CD4-positive, alpha-beta T cell (primary cell): ENCODE measurements at regions of chr1 and their contacts with region 1.

Region 1: DNA sequence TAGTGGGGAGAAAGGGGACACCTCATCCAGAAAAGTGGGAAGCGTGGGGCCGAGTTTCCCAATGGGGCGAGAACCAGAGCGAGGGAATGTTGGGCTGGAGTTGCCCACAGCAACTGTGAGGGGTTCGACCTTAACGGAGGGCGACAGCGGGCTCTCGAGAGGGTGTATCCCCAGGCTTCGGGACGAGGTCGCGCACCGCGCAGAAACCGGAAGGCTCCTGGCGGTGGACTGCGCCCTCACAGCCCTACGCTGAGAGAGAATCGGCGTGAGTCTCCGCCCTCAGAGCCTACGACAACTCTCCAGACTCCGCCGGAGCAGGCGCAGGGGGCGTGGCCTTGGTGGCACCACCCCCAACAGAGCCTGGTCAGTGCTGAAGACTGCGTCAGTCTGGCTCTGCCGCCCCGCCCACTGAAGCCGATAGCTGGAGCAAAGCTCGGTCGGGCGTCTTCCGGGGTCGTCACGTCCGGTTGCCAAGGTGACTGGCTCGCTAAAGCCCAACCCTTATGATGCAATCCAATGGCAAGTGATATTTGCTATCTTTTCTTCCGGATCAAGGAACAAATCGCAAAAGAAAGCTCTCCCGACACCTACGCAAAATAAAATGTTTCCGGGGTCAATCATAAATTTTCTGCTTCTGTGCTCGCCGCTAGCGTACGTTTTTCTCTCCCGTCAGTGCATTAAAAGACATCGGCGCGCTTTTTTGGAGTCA is at the start of gene LRIF1:
- DNase-seq: peak; percentile 99 to 100 (median 100)
- ATAC-seq: peak; percentile 95
- H3K4me3 ChIP-seq: peak within 1 kb of the TSS; percentile 76
- H3K4me3 Mint-ChIP-seq: peak within 1 kb of the TSS; percentile 90
- H3K27ac ChIP-seq: peak within 1 kb of the TSS; percentile 94 to 100
- H3K27ac Mint-ChIP-seq: peak within 1 kb of the TSS; percentile 93
- H3K4me1 ChIP-seq: peaks cover 12% of the 10 kb centered on the region
- H3K4me1 Mint-ChIP-seq: peaks cover 36% of the 10 kb centered on the region
- H3K27me3 ChIP-seq: peaks cover 4 to 9% of the 10 kb centered on the region in 2 experiments
- H3K27me3 Mint-ChIP-seq: peaks cover 15% of the 10 kb centered on the region
- CTCF ChIP-seq: no peak
- total RNA-seq, gene LRIF1: 1.6 to 1.8 TPM

Region 2: GRCh38 chr1:110034451-110035235 is 929.2 kb before region 1 on chr1 and contains the start of gene STRIP1:
- CTCF ChIA-PET with region 1: no interaction called
- POLR2A ChIA-PET with region 1: no interaction called
- intact Hi-C with region 1: loop called in 1 of 2 experiments (anchors 5 kb)
- DNase-seq: peak; percentile 85 to 98 (median 89)
- ATAC-seq: peak; percentile 95
- H3K4me3 ChIP-seq: peak within 1 kb of the TSS; percentile 84
- H3K4me3 Mint-ChIP-seq: peak within 1 kb of the TSS; percentile 98
- H3K27ac ChIP-seq: peak within 1 kb of the TSS; percentile 37 to 64
- H3K27ac Mint-ChIP-seq: peak within 1 kb of the TSS; percentile 81
- H3K4me1 ChIP-seq: peaks cover 41% of the 10 kb centered on the region
- H3K4me1 Mint-ChIP-seq: peaks cover 56% of the 10 kb centered on the region
- H3K27me3 ChIP-seq: no peaks in the 10 kb centered on the region
- H3K27me3 Mint-ChIP-seq: no peaks in the 10 kb centered on the region
- CTCF ChIP-seq: no peak
- total RNA-seq, gene STRIP1: 74.3 to 80.9 TPM

Region 3: DNA sequence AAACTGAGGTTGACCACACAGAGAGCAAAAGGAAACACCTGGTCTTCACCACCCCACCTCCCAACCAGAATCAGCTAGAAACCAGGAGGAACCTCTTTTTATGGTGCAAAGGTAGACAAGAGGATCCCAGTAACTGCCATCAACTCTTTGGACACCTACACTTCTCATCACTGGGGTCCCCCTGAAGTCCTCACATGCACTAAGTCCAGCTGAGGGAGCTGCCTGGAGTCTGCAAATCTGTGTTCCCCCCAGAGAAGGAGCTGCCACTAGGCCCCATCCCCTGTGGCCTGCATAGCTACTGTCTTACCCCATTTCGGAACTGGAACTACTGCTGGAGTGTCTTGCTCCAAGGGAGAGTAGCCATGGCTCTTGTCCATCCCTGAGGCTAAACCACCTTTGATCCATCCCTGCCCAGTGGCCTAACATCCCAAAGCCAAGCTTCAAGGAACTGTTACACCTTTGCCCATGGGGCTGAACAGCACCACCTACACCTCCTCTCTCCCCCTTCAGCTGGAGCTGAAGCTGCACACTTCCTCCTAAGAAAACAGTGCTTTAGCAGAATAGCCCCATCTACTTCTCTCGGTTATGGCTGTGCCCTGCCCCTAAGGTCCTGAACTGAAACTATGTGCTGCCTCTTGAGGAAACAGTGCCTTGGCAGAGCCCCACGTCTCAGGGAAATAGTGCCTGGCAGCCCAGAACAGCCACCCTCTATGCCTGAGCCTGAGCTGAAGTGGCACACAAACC is 176.3 kb before region 1 on chr1:
- CTCF ChIA-PET with region 1: interaction called, 3 read pairs
- POLR2A ChIA-PET with region 1: interaction called, 40 read pairs
- intact Hi-C with region 1: loop called (anchors 2 to 10 kb)
- DNase-seq: peak in 11 of 14 experiments; percentile 4 to 87 (median 41)
- ATAC-seq: peak; percentile 71
- H3K4me3 ChIP-seq: peak overlapping the region; percentile 35
- H3K4me3 Mint-ChIP-seq: peak overlapping the region; percentile 75
- H3K27ac ChIP-seq: peak overlapping the region; percentile 23 to 58
- H3K27ac Mint-ChIP-seq: peak overlapping the region; percentile 82
- H3K4me1 ChIP-seq: peaks cover 55% of the 10 kb centered on the region
- H3K4me1 Mint-ChIP-seq: peaks cover 77% of the 10 kb centered on the region
- H3K27me3 ChIP-seq: no peaks in the 10 kb centered on the region
- H3K27me3 Mint-ChIP-seq: no peaks in the 10 kb centered on the region
- CTCF ChIP-seq: no peak

Region 4: DNA sequence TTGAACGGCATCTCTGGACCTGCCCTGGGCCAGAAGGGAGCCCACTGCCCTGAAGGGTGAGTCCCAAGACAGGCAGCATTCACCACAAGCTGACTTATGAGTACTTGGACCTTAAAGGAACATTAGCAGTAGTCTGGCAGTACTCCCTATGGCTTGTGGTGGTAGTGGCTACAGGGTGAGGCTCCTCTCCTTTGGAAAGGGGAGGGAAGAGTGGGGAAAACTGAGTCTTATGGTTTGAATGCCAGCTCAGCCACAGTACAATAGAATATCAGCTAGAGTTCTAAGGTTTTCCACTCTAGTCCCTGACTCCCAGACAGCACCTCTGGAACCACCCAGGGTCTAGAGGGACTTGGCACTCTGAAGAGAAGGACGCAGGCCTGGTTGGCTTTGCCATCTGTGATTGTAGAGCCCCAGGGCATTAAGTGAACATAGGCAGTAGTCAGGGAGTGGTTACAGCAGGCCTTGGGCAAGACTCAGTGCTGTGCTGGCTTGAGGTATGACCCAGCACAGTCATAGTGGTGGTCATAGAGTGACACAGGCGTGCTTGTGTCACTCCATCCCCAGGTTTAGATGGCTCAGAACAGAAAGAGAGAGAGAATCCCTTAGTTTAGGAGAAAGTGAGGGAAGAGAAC is 59.9 kb before region 1 on chr1:
- CTCF ChIA-PET with region 1: no interaction called
- POLR2A ChIA-PET with region 1: interaction called, 9 read pairs
- intact Hi-C with region 1: loop called in 1 of 2 experiments (anchors 5 kb)
- DNase-seq: peak in 1 of 14 experiments; percentile 26
- ATAC-seq: peak; percentile 18
- H3K4me3 ChIP-seq: no peak overlapping the region
- H3K4me3 Mint-ChIP-seq: no peak overlapping the region
- H3K27ac ChIP-seq: no peak overlapping the region
- H3K27ac Mint-ChIP-seq: peak overlapping the region; percentile 19
- H3K4me1 ChIP-seq: peaks cover 6% of the 10 kb centered on the region
- H3K4me1 Mint-ChIP-seq: peaks cover 45% of the 10 kb centered on the region
- H3K27me3 ChIP-seq: no peaks in the 10 kb centered on the region
- H3K27me3 Mint-ChIP-seq: no peaks in the 10 kb centered on the region
- CTCF ChIP-seq: no peak

Region 5: DNA sequence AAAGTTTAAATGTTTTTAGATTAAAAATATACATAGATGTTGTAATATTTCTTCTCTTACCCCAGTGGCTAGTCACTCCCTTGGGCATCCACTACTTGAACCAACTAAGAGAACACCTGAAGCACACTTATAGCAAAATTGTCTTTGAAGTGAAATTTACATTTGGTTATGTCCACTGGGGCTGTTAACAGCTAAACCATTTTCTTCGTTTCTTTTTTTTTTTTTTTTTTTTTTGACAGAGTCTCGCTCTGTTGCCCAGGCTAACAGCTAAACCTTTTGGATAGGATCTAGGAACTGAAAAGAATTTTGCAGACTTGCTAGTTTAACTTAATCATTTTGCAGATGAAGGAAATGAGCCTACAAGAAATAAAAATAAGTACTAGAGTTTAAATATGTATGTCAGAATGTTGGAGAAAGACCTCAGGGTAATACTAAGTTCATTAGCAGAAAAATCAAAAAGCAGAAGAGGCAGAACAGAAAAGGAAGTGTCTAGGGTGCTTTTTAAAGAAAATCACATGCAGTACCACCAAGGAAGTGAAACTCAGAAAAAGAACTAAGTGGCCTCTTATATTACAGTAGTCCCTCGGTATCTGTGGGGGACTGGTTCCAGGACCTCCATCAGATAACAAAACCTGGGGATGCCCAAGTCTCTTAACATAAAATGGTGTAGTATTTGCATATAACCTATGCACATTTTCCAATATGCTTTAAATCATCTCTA is 164.2 kb after region 1 on chr1:
- CTCF ChIA-PET with region 1: no interaction called
- POLR2A ChIA-PET with region 1: no interaction called
- intact Hi-C with region 1: no loop called
- DNase-seq: peak in 3 of 14 experiments; percentile 15 to 28 (median 27)
- ATAC-seq: no peak
- H3K4me3 ChIP-seq: no peak overlapping the region
- H3K4me3 Mint-ChIP-seq: no peak overlapping the region
- H3K27ac ChIP-seq: no peak overlapping the region
- H3K27ac Mint-ChIP-seq: peak overlapping the region; percentile 52
- H3K4me1 ChIP-seq: no peaks in the 10 kb centered on the region
- H3K4me1 Mint-ChIP-seq: peaks cover 43% of the 10 kb centered on the region
- H3K27me3 ChIP-seq: no peaks in the 10 kb centered on the region
- H3K27me3 Mint-ChIP-seq: no peaks in the 10 kb centered on the region
- CTCF ChIP-seq: no peak

Region 6: DNA sequence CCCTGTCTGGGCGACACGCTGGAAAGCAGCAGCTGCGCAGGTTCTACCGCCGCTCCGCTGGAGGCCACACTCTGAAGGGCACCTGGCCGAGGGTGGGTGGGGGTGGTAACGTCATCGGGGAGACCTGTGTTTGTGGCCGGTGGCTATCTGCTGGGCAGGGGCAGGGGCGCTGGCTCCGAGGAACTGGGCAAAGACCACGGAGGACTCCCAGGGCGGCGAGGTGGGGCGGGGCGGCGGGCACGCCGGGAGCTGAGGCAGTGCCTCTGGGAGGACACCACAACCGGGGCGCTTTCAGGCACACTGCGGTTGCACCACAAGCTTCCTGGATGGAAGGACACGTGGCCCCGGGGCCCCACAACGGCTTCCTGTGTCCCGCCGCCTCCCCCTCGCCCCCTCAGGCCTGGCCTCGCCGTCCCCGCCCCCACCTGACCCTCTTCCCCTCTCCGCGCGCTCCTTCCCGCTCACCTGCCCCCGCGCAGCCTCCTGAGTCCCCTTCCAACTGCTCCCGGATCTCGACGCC is 239.9 kb after region 1 on chr1:
- CTCF ChIA-PET with region 1: no interaction called
- POLR2A ChIA-PET with region 1: no interaction called
- intact Hi-C with region 1: loop called in 1 of 2 experiments (anchors 5 kb)
- DNase-seq: peak; percentile 52 to 93 (median 84)
- ATAC-seq: peak; percentile 39
- H3K4me3 ChIP-seq: peak overlapping the region; percentile 79
- H3K4me3 Mint-ChIP-seq: peak overlapping the region; percentile 99
- H3K27ac ChIP-seq: peak overlapping the region; percentile 70 to 97
- H3K27ac Mint-ChIP-seq: peak overlapping the region; percentile 90
- H3K4me1 ChIP-seq: peaks cover 50% of the 10 kb centered on the region
- H3K4me1 Mint-ChIP-seq: peaks cover 83% of the 10 kb centered on the region
- H3K27me3 ChIP-seq: no peaks in the 10 kb centered on the region
- H3K27me3 Mint-ChIP-seq: no peaks in the 10 kb centered on the region
- CTCF ChIP-seq: no peak

Region 7: DNA sequence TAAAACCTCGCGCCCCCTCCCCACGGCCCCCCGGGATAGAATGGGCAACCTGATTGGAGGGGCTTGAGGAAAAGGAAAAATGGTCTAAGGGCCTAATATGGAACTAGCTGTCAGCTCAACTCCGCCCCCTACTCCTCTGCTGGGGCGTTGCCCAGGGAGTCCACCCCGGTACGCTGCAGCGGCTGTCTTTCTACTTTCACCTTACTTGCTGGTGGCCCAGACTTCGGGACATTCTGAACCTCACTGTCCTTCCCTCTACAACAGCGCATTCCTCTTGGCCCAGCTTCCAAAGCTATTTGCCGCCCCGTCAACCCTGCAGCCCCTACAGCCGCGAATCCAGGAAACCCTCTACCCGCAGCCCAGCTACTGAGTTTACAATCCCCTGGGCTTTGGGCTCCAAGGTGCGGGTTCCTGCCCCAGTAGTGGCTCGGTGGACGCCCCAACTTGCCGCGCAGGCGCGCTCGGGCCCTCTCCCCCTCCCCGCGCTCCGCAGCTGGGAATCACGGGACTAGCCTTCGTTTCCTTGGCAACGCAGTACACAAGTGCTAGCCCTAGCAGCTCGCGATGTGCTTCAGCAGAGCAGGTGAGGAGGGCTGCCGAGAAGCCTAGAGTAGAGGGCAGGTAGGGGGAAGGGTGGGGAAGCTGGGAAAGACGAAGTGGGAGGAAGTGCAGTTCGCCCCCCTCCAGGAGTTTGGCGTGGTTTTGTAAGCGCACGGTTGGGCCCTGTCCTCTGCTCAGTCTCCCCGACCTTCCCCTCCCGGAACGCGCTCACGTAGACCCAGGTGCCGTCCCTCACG is 382.4 kb after region 1 on chr1:
- CTCF ChIA-PET with region 1: no interaction called
- POLR2A ChIA-PET with region 1: interaction called, 7 read pairs
- intact Hi-C with region 1: loop called in 1 of 2 experiments (anchors 5 kb)
- DNase-seq: peak; percentile 76 to 97 (median 86)
- ATAC-seq: peak; percentile 88
- H3K4me3 ChIP-seq: peak overlapping the region; percentile 71
- H3K4me3 Mint-ChIP-seq: peak overlapping the region; percentile 88
- H3K27ac ChIP-seq: peak overlapping the region; percentile 43 to 73
- H3K27ac Mint-ChIP-seq: peak overlapping the region; percentile 85
- H3K4me1 ChIP-seq: peaks cover 14% of the 10 kb centered on the region
- H3K4me1 Mint-ChIP-seq: peaks cover 29% of the 10 kb centered on the region
- H3K27me3 ChIP-seq: no peaks in the 10 kb centered on the region
- H3K27me3 Mint-ChIP-seq: no peaks in the 10 kb centered on the region
- CTCF ChIP-seq: peak; percentile 30